ENCODE measurements at regions of chr15 and their contacts with region 1.

Region 1: DNA sequence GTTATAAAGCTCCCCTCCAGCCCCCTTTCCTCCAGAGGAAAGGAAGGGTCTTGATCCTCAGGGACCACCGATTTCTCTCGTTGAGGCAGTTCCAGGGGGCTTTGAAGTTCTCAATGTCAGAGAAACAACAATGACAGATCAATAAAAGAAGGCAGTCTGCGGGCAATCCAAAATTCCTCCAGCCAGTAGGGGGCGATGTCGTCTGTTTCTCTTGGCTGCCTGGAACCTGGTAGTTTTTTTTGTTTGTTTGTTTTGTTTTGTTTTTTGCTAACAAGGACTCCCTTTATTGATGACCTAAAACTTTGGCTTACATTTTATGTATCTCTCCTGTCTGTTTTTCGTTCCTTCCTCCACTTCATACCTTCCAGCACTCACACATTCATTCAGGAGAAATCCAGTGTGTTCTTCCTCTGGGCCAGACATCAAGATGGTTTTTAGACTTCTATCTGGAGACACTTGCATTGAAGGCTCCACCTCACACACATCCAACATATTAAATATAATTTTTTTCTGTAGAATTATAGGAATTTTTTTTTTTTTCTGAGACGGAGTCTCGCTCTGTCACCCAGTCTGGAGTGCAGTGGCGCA is 276.6 kb downstream of the RPLP1 start:
- DNase-seq: peak; percentile 39
- H3K4me3 ChIP-seq: no peak overlapping the region
- H3K27ac ChIP-seq: no peak overlapping the region
- H3K4me1 ChIP-seq: no peaks in the 10 kb centered on the region
- H3K27me3 ChIP-seq: peaks cover 6 to 12% of the 10 kb centered on the region in 2 experiments
- CTCF ChIP-seq: peak; percentile 83 to 84
- POLR2A ChIP-seq: no peak

Region 2: GRCh38 chr15:69523010-69524001 is 205.9 kb before region 1 on chr15:
- CTCF ChIA-PET with region 1: no interaction called
- POLR2A ChIA-PET with region 1: no interaction called
- dilution Hi-C with region 1: no loop called
- intact Hi-C with region 1: loop called (anchors 5 kb)
- DNase-seq: peak; percentile 62
- H3K4me3 ChIP-seq: no peak overlapping the region
- H3K27ac ChIP-seq: no peak overlapping the region
- H3K4me1 ChIP-seq: no peaks in the 10 kb centered on the region
- H3K27me3 ChIP-seq: peaks cover 0 to 2% of the 10 kb centered on the region in 2 experiments
- CTCF ChIP-seq: peak; percentile 67 to 74
- POLR2A ChIP-seq: no peak

Region 3: DNA sequence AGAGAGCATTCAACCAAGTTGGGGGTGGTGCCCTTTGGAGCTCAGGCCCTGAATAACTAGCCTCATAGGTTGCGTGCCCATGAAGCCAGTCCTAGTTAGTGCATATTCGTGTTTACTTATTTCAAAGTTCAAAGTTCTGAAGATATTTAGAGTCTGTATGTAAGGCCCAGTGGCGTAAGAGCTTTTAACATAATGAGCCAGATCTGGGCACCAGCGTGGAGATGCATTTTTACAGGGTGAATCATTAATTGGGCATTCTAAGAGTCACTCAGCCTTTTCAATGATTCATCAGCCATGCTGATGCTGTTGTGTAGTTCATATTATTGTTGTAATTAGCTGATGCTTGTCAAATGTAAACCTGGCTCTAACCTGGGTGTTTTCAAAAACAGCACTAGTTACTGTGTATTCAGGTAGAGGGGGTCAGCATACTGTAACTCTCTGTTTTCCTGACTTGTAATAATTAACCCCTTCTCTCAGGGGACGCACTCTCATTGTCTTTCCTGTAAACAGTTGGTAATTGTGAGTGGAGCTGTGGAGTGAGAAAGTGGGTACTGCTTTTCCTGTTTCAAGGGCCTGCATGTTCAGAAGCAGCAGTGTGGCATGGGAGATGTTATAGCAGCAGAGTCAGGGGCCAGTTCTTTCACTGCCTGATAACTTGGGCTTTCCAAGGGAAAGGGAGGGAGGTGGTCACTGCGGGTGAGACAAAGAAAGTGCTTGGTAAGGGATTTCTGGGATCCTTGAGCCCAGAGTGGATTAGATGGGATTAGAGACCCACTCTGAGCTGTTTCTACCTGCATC is 171.7 kb before region 1 on chr15:
- CTCF ChIA-PET with region 1: no interaction called
- POLR2A ChIA-PET with region 1: no interaction called
- dilution Hi-C with region 1: no loop called
- intact Hi-C with region 1: no loop called
- DNase-seq: peak; percentile 92
- H3K4me3 ChIP-seq: no peak overlapping the region
- H3K27ac ChIP-seq: peak overlapping the region; percentile 62
- H3K4me1 ChIP-seq: peaks cover 14% of the 10 kb centered on the region
- H3K27me3 ChIP-seq: no peaks in the 10 kb centered on the region
- CTCF ChIP-seq: no peak
- POLR2A ChIP-seq: no peak

Region 4: DNA sequence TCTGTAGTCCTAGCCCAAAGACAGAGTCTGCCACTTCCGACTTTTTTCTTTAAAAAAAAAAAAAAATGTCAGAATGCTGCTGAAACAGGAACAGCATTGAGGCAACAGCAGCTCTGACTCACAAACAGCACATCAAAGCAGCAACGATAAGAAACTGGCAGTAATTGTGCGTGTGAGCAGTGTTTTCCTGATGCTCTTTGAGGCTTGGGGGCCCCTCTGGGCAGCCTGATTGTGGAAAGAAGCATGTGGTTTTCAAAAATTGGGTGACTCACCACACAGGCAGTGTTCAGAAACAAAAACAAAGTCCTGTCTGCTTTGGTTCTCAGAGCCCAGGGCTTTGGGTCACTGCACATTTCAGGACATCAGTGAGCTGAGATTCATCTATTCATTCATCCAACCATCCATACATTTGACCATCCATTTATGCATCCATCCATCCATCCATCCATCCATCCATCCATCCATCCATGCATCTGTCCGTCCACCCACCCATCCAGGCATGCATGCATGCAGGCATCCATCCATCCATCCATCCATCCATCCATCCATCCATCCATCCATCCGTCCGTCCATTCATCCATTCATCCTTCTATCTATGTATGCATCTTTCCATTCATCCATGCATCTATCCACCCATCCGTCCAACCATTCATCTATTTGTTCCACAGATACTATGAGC is 31.8 kb after region 1 on chr15:
- CTCF ChIA-PET with region 1: no interaction called
- POLR2A ChIA-PET with region 1: no interaction called
- dilution Hi-C with region 1: no loop called
- intact Hi-C with region 1: loop called (anchors 2 kb)
- DNase-seq: peak; percentile 97
- H3K4me3 ChIP-seq: no peak overlapping the region
- H3K27ac ChIP-seq: peak overlapping the region; percentile 67
- H3K4me1 ChIP-seq: peaks cover 36% of the 10 kb centered on the region
- H3K27me3 ChIP-seq: no peaks in the 10 kb centered on the region
- CTCF ChIP-seq: no peak
- POLR2A ChIP-seq: peak; percentile 39

Region 5: DNA sequence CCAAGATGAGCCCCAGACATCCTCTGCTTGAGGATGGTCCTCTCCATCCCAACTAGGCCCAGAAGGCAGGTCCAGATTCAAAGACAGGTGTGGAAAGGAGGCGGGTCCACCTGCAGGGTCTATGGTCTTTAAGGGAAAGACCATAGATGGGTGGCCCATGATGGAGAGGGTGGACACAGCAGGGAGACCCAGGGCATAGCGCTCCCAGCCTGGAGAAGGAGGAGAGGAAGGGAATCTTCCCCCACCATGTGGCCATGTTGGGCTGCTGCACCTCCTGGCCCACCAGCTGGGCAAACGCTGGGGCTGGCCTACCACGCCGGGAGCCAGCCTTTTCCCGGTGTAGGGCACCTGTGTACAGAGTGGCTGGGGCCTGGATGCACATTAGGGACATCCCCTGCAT is 633.6 kb after region 1 on chr15:
- CTCF ChIA-PET with region 1: interaction called, 8 read pairs
- POLR2A ChIA-PET with region 1: no interaction called
- dilution Hi-C with region 1: no loop called
- intact Hi-C with region 1: loop called (anchors 1 kb)
- DNase-seq: peak; percentile 38
- H3K4me3 ChIP-seq: no peak overlapping the region
- H3K27ac ChIP-seq: no peak overlapping the region
- H3K4me1 ChIP-seq: no peaks in the 10 kb centered on the region
- H3K27me3 ChIP-seq: no peaks in the 10 kb centered on the region
- CTCF ChIP-seq: peak; percentile 55 to 87
- POLR2A ChIP-seq: no peak

Region 6: DNA sequence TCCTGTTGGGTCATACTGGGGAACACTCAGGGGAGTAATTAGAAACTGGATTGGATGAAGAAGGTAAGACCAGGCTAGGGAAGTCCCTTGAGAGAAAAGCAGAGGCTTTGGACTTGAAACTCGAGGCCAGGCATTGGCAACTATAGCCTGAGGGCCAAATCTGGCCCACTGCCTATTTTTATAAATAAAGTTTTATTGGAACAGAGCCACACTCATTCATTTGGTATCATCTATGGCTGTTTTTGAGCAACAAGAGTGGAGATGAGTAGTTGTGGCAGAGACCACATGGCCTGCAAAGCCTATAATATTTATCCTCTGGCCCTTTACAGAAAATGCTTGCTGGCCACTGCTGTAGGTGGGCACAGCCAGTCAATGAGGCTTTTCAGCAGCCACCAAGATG is 732.7 kb after region 1 on chr15:
- CTCF ChIA-PET with region 1: interaction called, 5 read pairs
- POLR2A ChIA-PET with region 1: no interaction called
- dilution Hi-C with region 1: no loop called
- intact Hi-C with region 1: loop called (anchors 2 kb)
- DNase-seq: no peak
- H3K4me3 ChIP-seq: no peak overlapping the region
- H3K27ac ChIP-seq: no peak overlapping the region
- H3K4me1 ChIP-seq: no peaks in the 10 kb centered on the region
- H3K27me3 ChIP-seq: peaks cover 3 to 6% of the 10 kb centered on the region in 2 experiments
- CTCF ChIP-seq: no peak
- POLR2A ChIP-seq: no peak

Measured in endothelial cell of umbilical vein (primary cell).